Endothelial cell of umbilical vein (primary cell): ENCODE measurements at regions of chr2 and their contacts with region 1.

Region 1: GRCh38 chr2:197191177-197191939 is 119.2 kb downstream of the ANKRD44 start:
- DNase-seq: peak; percentile 55
- H3K4me3 ChIP-seq: no peak overlapping the region
- H3K27ac ChIP-seq: no peak overlapping the region
- H3K4me1 ChIP-seq: peaks cover 8% of the 10 kb centered on the region
- H3K27me3 ChIP-seq: peaks cover 0 to 5% of the 10 kb centered on the region in 2 experiments
- CTCF ChIP-seq: peak; percentile 36 to 37
- POLR2A ChIP-seq: no peak

Region 2: DNA sequence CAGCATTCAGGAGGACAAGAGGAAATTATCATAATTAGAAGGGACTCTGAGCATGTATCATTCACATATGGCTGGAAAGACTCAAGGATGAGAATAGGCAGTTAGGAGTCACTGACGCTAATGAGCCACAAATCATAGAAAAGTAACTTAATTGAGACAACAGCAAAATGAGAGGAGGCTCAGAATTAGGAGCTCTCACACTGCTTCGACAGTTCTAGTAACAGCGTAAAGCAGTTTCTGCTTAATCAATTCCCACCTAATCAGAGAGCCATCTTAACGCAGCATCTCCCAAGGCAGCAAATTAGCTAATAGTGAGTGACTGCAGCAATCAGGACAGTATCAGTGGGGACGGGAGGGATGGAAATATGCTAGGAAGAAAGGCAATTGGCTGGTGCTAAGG is 86.4 kb after region 1 on chr2:
- CTCF ChIA-PET with region 1: no interaction called
- POLR2A ChIA-PET with region 1: no interaction called
- dilution Hi-C with region 1: no loop called
- intact Hi-C with region 1: no loop called
- DNase-seq: no peak
- H3K4me3 ChIP-seq: no peak overlapping the region
- H3K27ac ChIP-seq: no peak overlapping the region
- H3K4me1 ChIP-seq: no peaks in the 10 kb centered on the region
- H3K27me3 ChIP-seq: peaks cover 0 to 4% of the 10 kb centered on the region in 2 experiments
- CTCF ChIP-seq: no peak
- POLR2A ChIP-seq: no peak

Region 3: GRCh38 chr2:197310271-197310985 is 119.1 kb after region 1 on chr2 and contains the start of gene ANKRD44:
- CTCF ChIA-PET with region 1: interaction called, 16 read pairs
- POLR2A ChIA-PET with region 1: no interaction called
- dilution Hi-C with region 1: no loop called
- intact Hi-C with region 1: loop called (anchors 1 kb)
- DNase-seq: peak; percentile 72
- H3K4me3 ChIP-seq: peak within 1 kb of the TSS; percentile 65 to 91 (median 85)
- H3K27ac ChIP-seq: no peak within 1 kb of the TSS
- H3K4me1 ChIP-seq: peaks cover 12% of the 10 kb centered on the region
- H3K27me3 ChIP-seq: peaks cover 11 to 16% of the 10 kb centered on the region in 2 experiments
- CTCF ChIP-seq: no peak
- POLR2A ChIP-seq: no peak
- total RNA-seq, gene ANKRD44: 6.1 and 8.1 TPM in 2 replicates

Region 4: DNA sequence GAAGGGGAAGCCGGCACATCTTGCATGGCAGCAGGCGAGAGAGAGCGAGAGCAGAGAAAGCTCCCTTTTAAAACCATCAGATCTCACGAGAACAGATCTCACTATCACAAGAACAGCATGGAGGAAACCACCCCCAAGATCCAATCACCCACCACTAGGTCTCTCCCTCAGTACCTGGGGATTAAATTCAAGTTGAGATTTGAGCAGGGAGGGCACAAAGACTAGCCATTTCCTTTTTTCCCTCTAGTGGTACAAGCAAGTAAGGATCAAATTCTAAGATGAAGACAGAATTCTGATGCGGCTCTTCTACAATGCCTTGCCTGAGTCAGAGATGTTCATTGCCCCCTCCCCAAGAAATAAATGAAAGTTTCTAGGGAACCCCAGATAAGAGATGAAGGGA is 164.8 kb after region 1 on chr2:
- CTCF ChIA-PET with region 1: interaction called, 4 read pairs
- POLR2A ChIA-PET with region 1: no interaction called
- dilution Hi-C with region 1: no loop called
- intact Hi-C with region 1: loop called (anchors 1 kb)
- DNase-seq: no peak
- H3K4me3 ChIP-seq: no peak overlapping the region
- H3K27ac ChIP-seq: no peak overlapping the region
- H3K4me1 ChIP-seq: no peaks in the 10 kb centered on the region
- H3K27me3 ChIP-seq: no peaks in the 10 kb centered on the region
- CTCF ChIP-seq: peak in 1 of 2 donors; percentile 31
- POLR2A ChIP-seq: no peak

Region 5: DNA sequence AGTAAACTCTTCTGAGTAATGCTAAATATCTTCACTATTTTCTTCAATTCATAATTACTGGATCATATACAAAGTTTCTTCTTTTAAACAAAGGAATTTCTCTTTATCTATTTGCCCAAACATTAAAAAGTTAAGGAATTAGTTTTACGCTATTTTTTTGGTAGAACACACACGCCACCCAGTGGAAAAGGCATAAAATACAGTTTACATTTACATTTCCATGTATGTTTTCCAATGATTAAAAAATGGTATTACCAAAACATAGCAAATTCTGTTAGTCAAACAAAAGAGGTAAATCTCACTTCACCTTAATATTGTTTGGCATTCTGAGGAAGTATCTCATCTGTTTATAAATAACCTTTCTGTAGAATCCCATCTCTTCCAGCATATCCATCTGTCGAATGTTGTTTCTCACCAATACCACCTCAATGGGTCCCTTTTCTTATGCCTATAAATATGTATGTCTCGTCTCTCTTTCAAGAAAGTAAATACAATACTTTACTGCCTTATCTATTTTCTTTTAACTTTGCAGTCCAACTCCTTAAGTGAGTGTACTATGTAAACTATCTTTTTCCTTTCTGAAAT is 586.6 kb after region 1 on chr2:
- CTCF ChIA-PET with region 1: no interaction called
- POLR2A ChIA-PET with region 1: no interaction called
- dilution Hi-C with region 1: no loop called
- intact Hi-C with region 1: loop called (anchors 5 kb)
- DNase-seq: peak; percentile 58
- H3K4me3 ChIP-seq: no peak overlapping the region
- H3K27ac ChIP-seq: no peak overlapping the region
- H3K4me1 ChIP-seq: no peaks in the 10 kb centered on the region
- H3K27me3 ChIP-seq: no peaks in the 10 kb centered on the region
- CTCF ChIP-seq: peak; percentile 28 to 32
- POLR2A ChIP-seq: no peak